ENCODE measurements at regions of chr6 and their contacts with region 1.

Region 1: GRCh38 chr6:38997128-38997761 is 51.3 kb upstream of the GLP1R start:
- DNase-seq: peak; percentile 23 to 82
- H3K4me3 ChIP-seq: no peak overlapping the region
- H3K27ac ChIP-seq: no peak overlapping the region
- H3K4me1 ChIP-seq: no peaks in the 10 kb centered on the region
- H3K27me3 ChIP-seq: no peaks in the 10 kb centered on the region
- CTCF ChIP-seq: peak; percentile 88 to 94 (median 93)
- EP300 ChIP-seq: no peak
- POLR2A ChIP-seq: no peak
- RAD21 ChIP-seq: peak; percentile 96 to 97

Region 2: GRCh38 chr6:38720295-38720694 is 276.9 kb before region 1 on chr6:
- CTCF ChIA-PET with region 1: no interaction called
- POLR2A ChIA-PET with region 1: no interaction called
- DNase-seq: no peak
- H3K4me3 ChIP-seq: no peak overlapping the region
- H3K27ac ChIP-seq: no peak overlapping the region
- H3K4me1 ChIP-seq: no peaks in the 10 kb centered on the region
- H3K27me3 ChIP-seq: peaks cover 0 to 4% (median 4%) of the 10 kb centered on the region in 4 experiments; a peak in 5 of 7 replicates
- CTCF ChIP-seq: peak in 2 of 3 experiments; percentile 39 to 42; a peak in 3 of 4 replicates
- EP300 ChIP-seq: no peak
- POLR2A ChIP-seq: no peak
- RAD21 ChIP-seq: peak; percentile 72 to 76

Region 3: GRCh38 chr6:38871741-38872568 is 125.3 kb before region 1 on chr6:
- CTCF ChIA-PET with region 1: interaction called, 36 read pairs
- POLR2A ChIA-PET with region 1: no interaction called
- DNase-seq: peak; percentile 39 to 86
- H3K4me3 ChIP-seq: no peak overlapping the region
- H3K27ac ChIP-seq: no peak overlapping the region
- H3K4me1 ChIP-seq: no peaks in the 10 kb centered on the region; a peak in 1 of 7 replicates
- H3K27me3 ChIP-seq: no peaks in the 10 kb centered on the region
- CTCF ChIP-seq: peak; percentile 73 to 96 (median 91)
- EP300 ChIP-seq: no peak
- POLR2A ChIP-seq: no peak
- RAD21 ChIP-seq: peak; percentile 92 to 96

Region 4: GRCh38 chr6:38982470-38982869 is 14.8 kb before region 1 on chr6:
- CTCF ChIA-PET with region 1: interaction called, 50 read pairs
- POLR2A ChIA-PET with region 1: interaction called, 3 read pairs
- DNase-seq: no peak
- H3K4me3 ChIP-seq: no peak overlapping the region
- H3K27ac ChIP-seq: no peak overlapping the region
- H3K4me1 ChIP-seq: peaks cover 2 to 6% (median 5%) of the 10 kb centered on the region in 4 experiments; a peak in 6 of 7 replicates
- H3K27me3 ChIP-seq: no peaks in the 10 kb centered on the region
- CTCF ChIP-seq: no peak
- EP300 ChIP-seq: no peak
- POLR2A ChIP-seq: no peak
- RAD21 ChIP-seq: no peak

Region 5: GRCh38 chr6:39029156-39030011 is 32.1 kb after region 1 on chr6:
- CTCF ChIA-PET with region 1: interaction called, 24 read pairs
- POLR2A ChIA-PET with region 1: no interaction called
- DNase-seq: peak in 1 of 2 experiments; percentile 93
- H3K4me3 ChIP-seq: no peak overlapping the region
- H3K27ac ChIP-seq: no peak overlapping the region
- H3K4me1 ChIP-seq: peaks cover 0 to 4% (median 0%) of the 10 kb centered on the region in 4 experiments; a peak in 1 of 7 replicates
- H3K27me3 ChIP-seq: no peaks in the 10 kb centered on the region; a peak in 1 of 7 replicates
- CTCF ChIP-seq: peak; percentile 81 to 97 (median 97)
- EP300 ChIP-seq: no peak
- POLR2A ChIP-seq: no peak
- RAD21 ChIP-seq: peak; percentile 70 to 79

Region 6: GRCh38 chr6:39102071-39102820 is 105.0 kb after region 1 on chr6:
- CTCF ChIA-PET with region 1: interaction called, 250 read pairs
- POLR2A ChIA-PET with region 1: no interaction called
- DNase-seq: peak in 1 of 2 experiments; percentile 86
- H3K4me3 ChIP-seq: no peak overlapping the region
- H3K27ac ChIP-seq: no peak overlapping the region
- H3K4me1 ChIP-seq: no peaks in the 10 kb centered on the region; a peak in 1 of 7 replicates
- H3K27me3 ChIP-seq: no peaks in the 10 kb centered on the region; a peak in 1 of 7 replicates
- CTCF ChIP-seq: peak; percentile 88 to 92 (median 90)
- EP300 ChIP-seq: no peak
- POLR2A ChIP-seq: no peak
- RAD21 ChIP-seq: peak; percentile 84 to 87

Region 7: GRCh38 chr6:39166189-39166911 is 169.1 kb after region 1 on chr6:
- CTCF ChIA-PET with region 1: interaction called, 27 read pairs
- POLR2A ChIA-PET with region 1: no interaction called
- DNase-seq: peak; percentile 79 to 99
- H3K4me3 ChIP-seq: no peak overlapping the region
- H3K27ac ChIP-seq: no peak overlapping the region
- H3K4me1 ChIP-seq: no peaks in the 10 kb centered on the region
- H3K27me3 ChIP-seq: no peaks in the 10 kb centered on the region
- CTCF ChIP-seq: peak; percentile 98 to 100 (median 98)
- EP300 ChIP-seq: no peak
- POLR2A ChIP-seq: no peak
- RAD21 ChIP-seq: peak; percentile 99 to 100

Region 8: GRCh38 chr6:39309942-39310531 is 312.8 kb after region 1 on chr6:
- CTCF ChIA-PET with region 1: interaction called, 26 read pairs
- POLR2A ChIA-PET with region 1: no interaction called
- DNase-seq: peak; percentile 53 to 92
- H3K4me3 ChIP-seq: no peak overlapping the region
- H3K27ac ChIP-seq: no peak overlapping the region
- H3K4me1 ChIP-seq: peaks cover 0 to 5% (median 3%) of the 10 kb centered on the region in 4 experiments; a peak in 4 of 7 replicates
- H3K27me3 ChIP-seq: peaks cover 21 to 43% (median 38%) of the 10 kb centered on the region in 4 experiments
- CTCF ChIP-seq: peak in 2 of 3 experiments; percentile 97 to 99; a peak in 3 of 4 replicates
- EP300 ChIP-seq: no peak
- POLR2A ChIP-seq: no peak
- RAD21 ChIP-seq: peak; percentile 99 to 100

Region 9: GRCh38 chr6:40648944-40649343 is 1651.7 kb after region 1 on chr6:
- CTCF ChIA-PET with region 1: no interaction called
- POLR2A ChIA-PET with region 1: no interaction called
- DNase-seq: no peak
- H3K4me3 ChIP-seq: no peak overlapping the region
- H3K27ac ChIP-seq: no peak overlapping the region
- H3K4me1 ChIP-seq: peaks cover 0 to 6% (median 5%) of the 10 kb centered on the region in 4 experiments; a peak in 5 of 7 replicates
- H3K27me3 ChIP-seq: no peaks in the 10 kb centered on the region; a peak in 1 of 7 replicates
- CTCF ChIP-seq: no peak
- EP300 ChIP-seq: no peak
- POLR2A ChIP-seq: no peak
- RAD21 ChIP-seq: no peak